Activated CD8-positive, alpha-beta T cell treated with anti-CD3 and anti-CD28 coated beads for 36 hours (primary cell): ENCODE measurements at regions of chr11 and their contacts with region 1.

Region 1: DNA sequence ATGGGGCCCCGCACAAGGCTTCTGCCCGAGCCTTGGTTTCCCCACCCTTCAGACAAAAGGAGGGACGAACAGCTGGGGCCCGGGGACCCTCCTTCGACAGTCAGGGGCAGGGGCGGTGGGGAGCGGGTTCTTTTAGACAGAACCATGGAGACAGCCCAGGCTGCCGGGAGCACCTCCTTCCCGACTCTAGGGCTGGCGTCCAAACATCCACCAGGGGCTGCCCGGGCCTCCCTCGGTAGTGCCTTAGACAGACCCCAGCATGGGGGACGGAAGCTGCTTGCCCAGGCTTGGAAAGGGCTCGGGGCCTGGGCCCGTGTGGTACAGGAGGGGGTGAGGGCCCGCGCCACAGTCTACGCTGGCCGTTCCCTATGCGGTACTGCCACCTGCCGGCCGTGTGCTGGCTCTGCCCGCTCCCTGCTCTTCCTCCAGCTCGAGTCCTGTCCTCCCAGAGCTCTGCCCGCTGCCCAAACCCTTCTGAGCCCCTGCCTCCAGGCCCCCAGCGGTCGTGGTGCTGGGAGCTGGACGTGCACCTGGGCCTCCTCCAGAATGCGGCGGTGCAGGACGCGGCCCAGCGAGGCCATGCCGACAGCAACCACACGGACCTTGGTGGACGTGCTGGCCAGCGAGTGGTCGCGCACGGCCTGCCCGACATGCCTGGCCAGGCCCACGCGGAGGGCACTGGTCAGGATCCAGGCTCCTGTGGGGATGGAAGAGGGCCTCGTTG is 20.1 kb downstream of the TSSC4 start:
- DNase-seq: peak; percentile 77
- ATAC-seq: peak; percentile 98
- H3K4me3 Mint-ChIP-seq: no peak overlapping the region
- H3K27ac Mint-ChIP-seq: no peak overlapping the region
- H3K4me1 Mint-ChIP-seq: peaks cover 2% of the 10 kb centered on the region
- H3K27me3 Mint-ChIP-seq: no peaks in the 10 kb centered on the region
- CTCF ChIP-seq: peak; percentile 95

Region 2: GRCh38 chr11:2196970-2197770 is 223.5 kb before region 1 on chr11:
- CTCF ChIA-PET with region 1: interaction called, 20 read pairs
- POLR2A ChIA-PET with region 1: no interaction called
- intact Hi-C with region 1: loop called (anchors 5 kb)
- DNase-seq: peak; percentile 86
- ATAC-seq: peak; percentile 98
- H3K4me3 Mint-ChIP-seq: no peak overlapping the region
- H3K27ac Mint-ChIP-seq: no peak overlapping the region
- H3K4me1 Mint-ChIP-seq: peaks cover 3% of the 10 kb centered on the region
- H3K27me3 Mint-ChIP-seq: peaks cover 9% of the 10 kb centered on the region
- CTCF ChIP-seq: peak; percentile 81

Region 3: GRCh38 chr11:2287091-2287490 is 133.6 kb before region 1 on chr11:
- CTCF ChIA-PET with region 1: interaction called, 15 read pairs
- POLR2A ChIA-PET with region 1: no interaction called
- intact Hi-C with region 1: no loop called
- DNase-seq: no peak
- ATAC-seq: no peak
- H3K4me3 Mint-ChIP-seq: no peak overlapping the region
- H3K27ac Mint-ChIP-seq: no peak overlapping the region
- H3K4me1 Mint-ChIP-seq: peaks cover 6% of the 10 kb centered on the region
- H3K27me3 Mint-ChIP-seq: no peaks in the 10 kb centered on the region
- CTCF ChIP-seq: no peak

Region 4: GRCh38 chr11:2383852-2384804 is 36.5 kb before region 1 on chr11:
- CTCF ChIA-PET with region 1: interaction called, 20 read pairs
- POLR2A ChIA-PET with region 1: interaction called, 3 read pairs
- intact Hi-C with region 1: no loop called
- DNase-seq: no peak
- ATAC-seq: peak; percentile 25
- H3K4me3 Mint-ChIP-seq: no peak overlapping the region
- H3K27ac Mint-ChIP-seq: no peak overlapping the region
- H3K4me1 Mint-ChIP-seq: peaks cover 59% of the 10 kb centered on the region
- H3K27me3 Mint-ChIP-seq: no peaks in the 10 kb centered on the region
- CTCF ChIP-seq: no peak

Region 5: GRCh38 chr11:2409611-2410468 is 10.8 kb before region 1 on chr11:
- CTCF ChIA-PET with region 1: interaction called, 15 read pairs
- POLR2A ChIA-PET with region 1: no interaction called
- intact Hi-C with region 1: no loop called
- DNase-seq: no peak
- ATAC-seq: no peak
- H3K4me3 Mint-ChIP-seq: no peak overlapping the region
- H3K27ac Mint-ChIP-seq: no peak overlapping the region
- H3K4me1 Mint-ChIP-seq: no peaks in the 10 kb centered on the region
- H3K27me3 Mint-ChIP-seq: no peaks in the 10 kb centered on the region
- CTCF ChIP-seq: no peak

Region 6: DNA sequence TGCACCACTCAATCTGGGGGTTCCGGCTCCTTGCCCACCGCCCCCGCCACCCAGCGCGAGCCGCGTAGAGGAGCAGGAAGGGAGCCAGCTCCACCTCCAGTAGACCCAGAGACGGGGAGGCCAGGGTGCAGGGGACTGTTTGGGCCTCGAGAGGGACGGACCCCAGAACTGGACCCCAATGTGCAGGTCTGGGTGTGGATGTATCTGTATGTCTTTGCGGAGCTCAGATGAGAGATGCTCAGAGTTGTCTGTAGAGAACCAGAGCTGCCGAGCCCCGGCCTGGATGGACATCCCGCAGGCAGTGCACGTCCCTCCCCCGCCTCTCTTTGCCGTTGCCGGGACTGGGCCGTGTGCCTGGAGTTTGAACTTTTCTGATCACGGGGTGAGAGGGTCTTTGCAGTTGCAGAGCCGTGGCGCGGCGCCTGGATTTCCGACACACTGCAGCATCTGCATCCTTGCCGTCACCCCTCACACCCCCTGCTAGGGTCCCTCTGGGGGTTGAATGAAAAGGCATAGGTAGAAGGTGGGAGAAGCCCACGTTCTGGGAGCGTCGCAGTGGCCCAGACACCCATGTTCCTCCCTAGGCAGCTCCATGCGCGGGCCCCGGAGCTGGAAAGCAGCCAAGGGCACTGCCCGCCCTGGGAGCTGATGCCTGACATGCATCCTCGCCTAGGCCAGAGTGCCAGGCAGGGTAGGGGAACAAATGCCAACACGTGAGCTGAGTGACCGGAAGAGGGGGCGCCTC is 129.4 kb after region 1 on chr11:
- CTCF ChIA-PET with region 1: no interaction called
- POLR2A ChIA-PET with region 1: no interaction called
- intact Hi-C with region 1: no loop called
- DNase-seq: no peak
- ATAC-seq: no peak
- H3K4me3 Mint-ChIP-seq: no peak overlapping the region
- H3K27ac Mint-ChIP-seq: no peak overlapping the region
- H3K4me1 Mint-ChIP-seq: peaks cover 9% of the 10 kb centered on the region
- H3K27me3 Mint-ChIP-seq: no peaks in the 10 kb centered on the region
- CTCF ChIP-seq: no peak